Esophagus squamous epithelium (tissue), 5 donors: ENCODE measurements at regions of chr21 and their contacts with region 1.

Region 1: GRCh38 chr21:46228345-46229051 is at the start of gene LSS:
- DNase-seq: peak; percentile 92
- H3K4me3 ChIP-seq: peak within 1 kb of the TSS; percentile 67 to 98 (median 75)
- H3K27ac ChIP-seq: peak within 1 kb of the TSS; percentile 83 to 96 (median 94)
- H3K4me1 ChIP-seq: peaks cover 20 to 54% (median 28%) of the 10 kb centered on the region in 3 donors
- H3K27me3 ChIP-seq: no peaks in the 10 kb centered on the region
- CTCF ChIP-seq: no peak
- POLR2A ChIP-seq: peak in 2 of 4 donors; percentile 52 to 85
- total RNA-seq, gene LSS: 55.5 to 131 (median 115) TPM

Region 2: GRCh38 chr21:46284077-46284644 is 55.7 kb after region 1 on chr21:
- intact Hi-C with region 1: loop called (anchors 5 kb)
- DNase-seq: no peak
- H3K4me3 ChIP-seq: peak overlapping the region in 2 of 4 donors; percentile 25 to 98
- H3K27ac ChIP-seq: peak overlapping the region in 1 of 4 donors; percentile 13
- H3K4me1 ChIP-seq: peaks cover 20 to 65% (median 36%) of the 10 kb centered on the region in 3 donors
- H3K27me3 ChIP-seq: no peaks in the 10 kb centered on the region
- CTCF ChIP-seq: no peak
- POLR2A ChIP-seq: no peak

Region 3: GRCh38 chr21:46323227-46324128 is 95.0 kb after region 1 on chr21 and contains the start of gene C21orf58:
- intact Hi-C with region 1: loop called (anchors 10 kb)
- DNase-seq: peak; percentile 84
- H3K4me3 ChIP-seq: peak within 1 kb of the TSS; percentile 74 to 99 (median 96)
- H3K27ac ChIP-seq: peak within 1 kb of the TSS; percentile 97 to 100 (median 100)
- H3K4me1 ChIP-seq: peaks cover 13 to 48% (median 20%) of the 10 kb centered on the region in 3 donors
- H3K27me3 ChIP-seq: no peaks in the 10 kb centered on the region
- CTCF ChIP-seq: peak in 1 of 6 experiments; percentile 12
- POLR2A ChIP-seq: peak in 1 of 4 donors; percentile 42
- total RNA-seq, gene C21orf58: 2.1 to 4.4 (median 2.7) TPM